ENCODE measurements at regions of chr4 and their contacts with region 1.

Region 1: DNA sequence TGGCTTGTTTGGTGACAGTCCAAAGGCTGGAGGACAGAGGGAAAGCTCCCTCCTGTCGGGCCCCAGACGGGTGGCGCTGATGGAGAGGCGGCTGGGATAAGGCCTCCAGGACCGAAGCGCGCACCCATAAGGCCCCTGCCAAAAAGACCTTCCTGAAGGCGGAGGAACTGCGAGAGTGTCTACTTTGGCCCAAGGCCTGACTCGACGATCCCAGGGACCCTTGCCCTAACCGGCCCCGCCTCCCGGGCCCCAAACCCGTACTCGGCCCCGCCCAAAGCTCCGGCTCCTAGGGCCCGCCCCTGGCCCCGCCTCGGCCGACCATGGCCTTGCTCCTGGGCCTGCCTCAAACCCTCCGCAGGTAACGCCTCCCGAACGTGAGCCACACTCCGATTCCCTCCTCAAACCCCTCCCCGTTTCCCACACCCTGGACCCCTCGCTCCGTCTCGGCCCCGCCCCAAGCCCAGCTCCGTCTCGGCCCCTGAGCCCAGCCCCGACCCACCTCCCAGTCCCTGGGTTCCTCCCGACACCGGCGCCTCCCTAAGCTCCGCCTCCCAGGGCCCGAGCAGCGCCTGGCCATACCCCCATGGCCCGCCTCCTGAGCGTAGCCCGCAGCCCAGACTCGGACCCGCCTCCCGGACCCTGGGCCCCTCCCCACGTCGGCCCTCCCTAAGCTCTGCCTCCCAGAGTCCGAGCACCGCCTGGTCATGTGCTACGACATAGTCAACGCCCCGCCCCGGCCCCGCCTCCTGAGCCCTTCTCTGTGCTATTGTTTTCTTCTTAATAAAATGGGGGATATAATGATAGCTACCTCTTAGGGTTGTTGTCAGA is 90.0 kb upstream of the DRD5 start:
- DNase-seq: peak; percentile 93 to 98 (median 96)
- H3K4me3 ChIP-seq: peak overlapping the region; percentile 42 to 86 (median 74)
- H3K27ac ChIP-seq: peak overlapping the region; percentile 47 to 90 (median 83)
- H3K27me3 ChIP-seq: no peaks in the 10 kb centered on the region
- CTCF ChIP-seq: peak in 7 of 56 donors; percentile 3 to 23 (median 14)

Region 2: DNA sequence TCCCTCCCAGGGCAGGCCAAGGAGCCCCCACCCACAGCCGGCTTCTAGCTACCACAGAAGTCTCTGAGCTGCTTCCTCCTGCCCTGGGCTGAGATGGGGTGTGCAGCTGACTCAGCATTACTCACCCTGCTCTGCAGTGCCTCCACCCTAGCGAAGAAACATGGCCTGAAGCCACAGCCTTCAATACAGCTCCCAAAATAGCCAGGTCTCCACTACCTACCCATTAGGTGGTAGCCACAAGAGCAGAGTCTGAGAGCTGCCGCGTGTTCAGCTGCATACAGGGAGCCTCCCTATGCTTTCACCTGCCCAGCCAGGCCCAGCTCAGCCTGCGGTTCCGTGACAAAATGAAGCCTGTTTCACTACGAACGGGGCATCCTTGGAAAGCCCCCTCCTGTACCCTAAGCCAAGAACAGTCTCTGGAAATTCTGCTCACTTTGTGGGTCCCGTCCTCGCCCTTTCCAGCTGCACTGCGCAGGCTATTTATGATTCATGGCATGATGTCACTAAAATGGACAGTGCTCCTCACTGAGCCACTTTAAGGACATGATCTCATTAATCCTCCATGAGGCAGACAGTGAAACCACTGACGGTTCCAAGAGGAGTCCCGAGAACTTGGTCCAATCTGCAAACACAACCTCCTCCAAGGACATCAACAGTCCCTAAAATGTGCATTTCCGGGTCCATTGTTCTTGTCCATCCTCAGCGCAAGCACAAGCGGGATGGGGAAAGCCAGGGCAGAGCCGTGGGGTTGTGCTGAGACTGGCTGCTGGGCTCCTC is 404.9 kb after region 1 on chr4:
- intact Hi-C with region 1: loop called in 1 of 2 experiments (anchors 10 kb)
- DNase-seq: peak in 4 of 10 donors; percentile 58 to 82 (median 67)
- H3K4me3 ChIP-seq: peak overlapping the region in 15 of 59 donors; percentile 2 to 44 (median 13)
- H3K27ac ChIP-seq: peak overlapping the region in 58 of 59 donors; percentile 35 to 91 (median 82)
- H3K27me3 ChIP-seq: no peaks in the 10 kb centered on the region
- CTCF ChIP-seq: no peak

Region 3: DNA sequence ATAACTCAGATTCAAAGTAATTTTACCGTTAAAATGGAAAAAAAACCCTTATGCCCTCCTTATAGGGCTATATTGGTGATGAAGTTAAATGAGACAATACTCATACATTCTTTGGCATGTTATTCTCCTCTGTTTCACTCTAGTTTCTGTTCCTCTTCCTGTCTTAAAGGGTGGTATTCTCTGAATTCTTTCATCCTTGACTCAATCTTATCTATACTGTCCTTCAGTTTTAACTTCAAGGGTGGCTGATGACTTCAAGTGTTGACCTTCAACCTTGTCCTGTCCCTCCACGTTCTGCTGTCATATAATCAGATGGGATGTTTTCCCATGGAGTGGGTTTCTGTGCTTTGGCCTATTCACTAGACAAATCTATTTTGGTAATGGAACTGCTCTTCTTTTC is 721.7 kb after region 1 on chr4:
- intact Hi-C with region 1: no loop called
- DNase-seq: no peak
- H3K4me3 ChIP-seq: no peak overlapping the region
- H3K27ac ChIP-seq: no peak overlapping the region
- H3K27me3 ChIP-seq: no peaks in the 10 kb centered on the region
- CTCF ChIP-seq: no peak